Dendritic cell treated with granulocyte-macrophage colony-stimulating factor and Interleukin-4, amounts not matched to agents 40 ng/mL and 50 ng/mL, for 4 days (primary cell): ENCODE measurements at regions of chr1 and their contacts with region 1.

Region 1: DNA sequence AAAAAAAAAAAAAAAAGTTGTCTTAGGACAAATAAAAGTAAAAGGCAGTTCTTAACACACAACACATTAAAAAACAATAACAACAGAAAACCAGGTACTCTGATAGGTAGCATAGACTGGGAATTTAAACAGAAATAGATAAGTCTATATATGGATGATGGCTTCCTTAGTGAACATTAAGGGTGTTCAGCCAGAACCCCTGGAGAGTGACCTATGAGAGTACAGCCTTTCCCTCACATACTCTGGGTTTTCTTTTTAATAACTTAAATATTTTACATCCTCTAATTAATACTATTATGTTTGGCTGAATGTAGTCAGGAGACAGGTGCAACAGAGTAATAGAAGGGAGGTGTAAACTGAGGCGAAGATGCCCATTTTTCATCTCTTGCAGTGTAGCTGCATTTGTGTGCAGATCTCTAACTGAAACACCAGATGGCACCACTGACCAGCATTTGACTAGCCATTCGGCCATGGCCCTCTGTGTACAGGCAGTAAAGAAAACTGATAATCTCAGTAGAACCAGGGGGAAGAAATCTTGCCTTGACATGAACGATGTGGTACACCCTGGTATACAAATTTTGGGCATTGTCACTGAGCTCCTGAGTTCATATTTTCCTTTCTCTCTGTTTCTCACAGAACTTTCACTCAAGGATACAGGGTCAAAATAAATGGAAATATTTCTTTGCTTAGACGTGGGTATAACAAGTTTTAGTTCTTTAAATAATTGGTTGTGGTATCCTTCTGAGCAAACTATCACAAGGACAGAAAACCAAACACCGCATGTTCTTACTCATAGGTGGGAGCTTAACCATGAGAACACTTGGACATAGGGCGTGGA is 7.6 kb downstream of the TTF2 start:
- H3K4me3 Mint-ChIP-seq: no peak overlapping the region
- H3K27ac Mint-ChIP-seq: no peak overlapping the region
- H3K4me1 Mint-ChIP-seq: peaks cover 14% of the 10 kb centered on the region
- H3K27me3 Mint-ChIP-seq: no peaks in the 10 kb centered on the region

Region 2: DNA sequence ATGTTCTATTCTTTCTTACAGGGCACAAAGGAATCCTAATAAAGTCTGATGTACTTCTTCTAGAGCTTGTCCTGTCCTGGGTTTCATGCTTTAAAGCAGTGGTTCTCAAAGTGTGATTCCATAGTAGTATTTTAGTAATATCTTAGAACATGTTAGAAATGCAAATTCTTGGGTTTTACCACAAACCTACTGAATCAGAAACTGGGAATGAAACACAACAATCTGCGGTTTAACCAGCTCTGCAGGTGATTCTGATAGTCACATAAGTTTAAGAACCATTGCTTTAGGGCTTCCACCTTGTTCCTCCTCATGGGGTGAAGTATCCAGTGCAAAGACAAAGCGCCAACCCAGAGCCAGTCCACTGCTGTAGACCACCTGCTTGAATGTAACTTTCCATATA is 1770.8 kb before region 1 on chr1:
- intact Hi-C with region 1: no loop called
- H3K4me3 Mint-ChIP-seq: no peak overlapping the region
- H3K27ac Mint-ChIP-seq: no peak overlapping the region
- H3K4me1 Mint-ChIP-seq: no peaks in the 10 kb centered on the region
- H3K27me3 Mint-ChIP-seq: peaks cover 4% of the 10 kb centered on the region

Region 3: DNA sequence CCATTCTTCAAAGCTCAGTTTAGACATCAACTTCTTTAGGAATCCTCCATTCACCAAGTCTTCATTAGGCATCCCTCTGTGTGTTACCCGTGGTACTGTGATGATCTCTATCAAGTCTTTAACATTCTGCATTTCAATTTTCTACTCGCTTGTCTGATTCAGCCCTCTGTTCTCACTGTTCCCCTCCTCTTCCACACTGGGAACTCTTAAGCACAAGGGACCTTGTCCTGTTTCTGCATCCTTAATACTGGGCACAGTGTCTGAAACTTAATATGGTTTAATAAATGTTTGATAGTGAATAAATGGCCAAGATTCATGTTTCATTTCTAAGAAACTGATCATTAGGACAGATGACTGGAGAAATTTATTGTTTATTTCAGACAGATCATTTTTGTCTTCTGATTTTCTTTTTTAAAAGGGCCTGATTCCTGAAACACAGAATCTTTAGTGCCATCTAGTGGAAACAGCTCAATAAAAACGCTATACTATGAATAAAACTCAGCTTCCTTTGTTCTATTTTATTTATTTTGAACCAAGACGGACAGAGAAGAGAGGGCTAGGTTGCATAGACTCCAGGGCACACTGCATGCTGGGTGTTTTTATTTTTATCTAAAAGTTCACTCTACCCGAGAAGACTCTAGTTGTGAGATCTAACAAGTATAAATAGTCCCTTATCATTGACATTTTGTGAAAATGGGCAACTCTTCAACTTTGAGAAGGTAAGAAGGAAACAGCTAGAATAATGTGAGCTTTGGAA is 60.7 kb after region 1 on chr1:
- intact Hi-C with region 1: loop called (anchors 1 kb)
- H3K4me3 Mint-ChIP-seq: no peak overlapping the region
- H3K27ac Mint-ChIP-seq: no peak overlapping the region
- H3K4me1 Mint-ChIP-seq: no peaks in the 10 kb centered on the region
- H3K27me3 Mint-ChIP-seq: peaks cover 1% of the 10 kb centered on the region

Region 4: GRCh38 chr1:117284399-117285215 is 216.9 kb after region 1 on chr1:
- intact Hi-C with region 1: loop called (anchors 5 kb)
- H3K4me3 Mint-ChIP-seq: no peak overlapping the region
- H3K27ac Mint-ChIP-seq: no peak overlapping the region
- H3K4me1 Mint-ChIP-seq: no peaks in the 10 kb centered on the region
- H3K27me3 Mint-ChIP-seq: peaks cover 2% of the 10 kb centered on the region

Region 5: DNA sequence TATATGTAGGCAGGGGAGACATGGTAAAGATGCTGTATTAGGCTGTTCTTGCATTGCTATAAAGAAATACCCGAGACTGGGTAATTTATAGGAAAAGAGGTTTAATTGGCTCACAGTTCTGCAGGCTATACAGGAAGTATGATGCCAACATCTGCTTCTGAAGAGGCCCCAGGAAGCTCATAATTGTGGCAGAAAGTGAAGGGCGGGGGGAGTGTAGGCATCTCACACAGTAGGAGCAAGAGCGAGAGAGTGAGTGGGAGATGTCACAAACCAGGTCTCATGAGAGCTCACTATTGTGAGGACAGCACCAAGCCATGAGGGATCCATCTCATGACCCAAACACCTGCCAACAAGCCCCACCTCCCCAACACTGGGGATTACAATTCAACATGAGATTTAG is 320.6 kb after region 1 on chr1:
- intact Hi-C with region 1: no loop called
- H3K4me3 Mint-ChIP-seq: no peak overlapping the region
- H3K27ac Mint-ChIP-seq: no peak overlapping the region
- H3K4me1 Mint-ChIP-seq: peaks cover 33% of the 10 kb centered on the region
- H3K27me3 Mint-ChIP-seq: no peaks in the 10 kb centered on the region

Region 6: DNA sequence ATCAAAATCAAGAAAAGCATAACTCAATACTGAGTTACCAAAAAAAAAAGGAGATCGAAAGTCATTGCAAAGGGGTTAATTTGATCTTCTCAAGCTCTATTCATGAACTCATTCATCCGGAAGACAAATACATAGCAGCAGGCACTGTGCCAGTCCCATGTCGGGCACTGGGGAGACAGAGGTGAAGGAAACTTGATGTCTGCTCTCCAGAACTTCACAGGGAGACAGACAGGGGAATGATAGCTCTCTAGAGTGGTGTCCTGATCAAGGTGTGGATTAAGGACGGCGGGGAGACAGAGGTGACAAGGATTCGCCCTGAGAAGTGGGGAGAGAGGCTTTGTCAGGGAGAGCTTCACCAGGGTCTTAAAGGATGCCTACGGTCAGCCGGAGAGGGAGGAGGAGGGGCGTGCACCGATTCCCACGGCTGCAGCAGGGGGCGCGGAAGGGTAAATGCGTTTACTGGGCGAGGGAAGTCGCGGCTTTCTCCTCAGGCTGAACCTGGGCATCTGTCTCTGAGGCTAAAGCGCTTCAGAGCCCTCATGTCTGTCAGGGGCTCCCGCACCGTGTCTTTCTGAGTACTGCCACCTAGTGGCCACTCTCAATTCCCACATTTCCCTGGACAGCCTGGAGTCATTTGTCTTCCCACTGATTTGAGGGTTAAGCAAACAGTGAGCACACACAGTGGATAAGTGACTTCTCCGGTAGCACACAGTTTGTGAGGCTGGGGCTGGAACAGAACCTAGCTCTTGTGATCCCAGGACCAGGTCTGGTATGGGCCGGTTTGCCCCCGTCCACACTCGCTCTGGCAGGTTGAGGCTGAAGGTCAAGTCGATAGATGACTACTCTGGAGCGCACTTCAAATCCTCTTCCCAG is 690.9 kb after region 1 on chr1:
- intact Hi-C with region 1: loop called (anchors 5 kb)
- H3K4me3 Mint-ChIP-seq: peak overlapping the region; percentile 66
- H3K27ac Mint-ChIP-seq: no peak overlapping the region
- H3K4me1 Mint-ChIP-seq: peaks cover 10% of the 10 kb centered on the region
- H3K27me3 Mint-ChIP-seq: peaks cover 15% of the 10 kb centered on the region